ENCODE measurements at regions of chr3 and their contacts with region 1.

Region 1: DNA sequence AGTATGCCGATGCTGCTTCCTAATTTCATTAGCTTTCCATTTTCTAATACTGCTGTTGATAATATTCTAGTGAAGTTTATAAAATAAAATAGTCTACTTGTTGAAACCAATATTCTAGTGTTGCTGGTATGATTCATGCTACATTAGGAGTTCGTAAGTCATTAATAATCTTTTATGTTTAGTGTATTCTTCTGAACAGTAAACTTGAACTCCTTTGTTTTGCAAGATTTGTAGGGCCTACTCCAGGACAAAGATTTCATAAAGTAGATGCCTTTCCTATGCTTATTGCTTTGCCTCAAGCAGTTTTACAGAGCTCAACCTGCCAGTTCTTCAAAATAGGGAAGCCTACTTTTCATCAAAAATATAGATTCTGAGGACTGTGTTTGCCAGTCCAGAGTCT is 111.5 kb downstream of the RSRC1 start:
- DNase-seq: no peak
- H3K4me3 Mint-ChIP-seq: no peak overlapping the region
- H3K27ac Mint-ChIP-seq: no peak overlapping the region
- H3K4me1 Mint-ChIP-seq: no peaks in the 10 kb centered on the region
- H3K27me3 Mint-ChIP-seq: no peaks in the 10 kb centered on the region

Region 2: GRCh38 chr3:158279609-158280008 is 58.2 kb after region 1 on chr3:
- intact Hi-C with region 1: loop called (anchors 10 kb)
- DNase-seq: no peak
- H3K4me3 Mint-ChIP-seq: no peak overlapping the region
- H3K27ac Mint-ChIP-seq: no peak overlapping the region
- H3K4me1 Mint-ChIP-seq: no peaks in the 10 kb centered on the region
- H3K27me3 Mint-ChIP-seq: no peaks in the 10 kb centered on the region

Measured in activated T-helper 1 cell treated with anti-CD3 and anti-CD28 coated beads, Interleukin-12 subunit alpha, Interleukin-12 subunit beta, Interleukin-2, Interleukin-4 antibody, amounts not matched to agents 30 ng/mL and 10 ng/mL and 1 ng/mL, durations not matched to agents 14 hours and 24 hours and 36 hours (primary cell).